ENCODE measurements at regions of chr11 and their contacts with region 1.

Region 1: GRCh38 chr11:103682318-103683184 is 353.9 kb upstream of the DDI1 start:
- DNase-seq: no peak
- H3K4me3 ChIP-seq: no peak overlapping the region
- CTCF ChIP-seq: peak; percentile 74

Region 2: DNA sequence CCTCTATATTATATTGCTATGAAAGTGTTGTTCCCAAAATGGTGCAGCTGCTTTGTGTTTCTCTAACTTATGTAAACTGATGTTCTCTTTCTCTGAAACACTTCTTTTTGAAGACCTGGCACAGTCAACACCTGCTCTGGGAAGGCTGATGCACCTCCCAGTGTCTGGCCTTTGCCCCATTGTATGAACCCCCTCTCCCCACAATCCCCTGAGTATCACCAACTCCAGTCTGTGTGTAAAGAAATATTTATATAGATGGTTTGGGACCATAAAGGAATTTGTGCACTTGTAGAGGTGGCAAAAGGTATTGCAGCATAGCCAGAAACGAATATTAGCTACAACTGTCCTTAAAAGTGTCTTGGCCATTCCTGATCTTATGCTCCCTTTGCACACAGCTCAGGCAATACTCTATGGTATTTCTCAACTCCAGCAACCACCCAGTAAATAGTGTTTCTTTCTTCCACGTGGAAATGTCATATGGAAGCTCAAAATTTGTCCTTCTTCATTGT is 11.4 kb before region 1 on chr11:
- CTCF ChIA-PET with region 1: interaction called, 41 read pairs
- POLR2A ChIA-PET with region 1: no interaction called
- DNase-seq: no peak
- H3K4me3 ChIP-seq: no peak overlapping the region
- CTCF ChIP-seq: no peak

Region 3: GRCh38 chr11:103700622-103701021 is 18.1 kb after region 1 on chr11:
- CTCF ChIA-PET with region 1: interaction called, 101 read pairs
- POLR2A ChIA-PET with region 1: no interaction called
- DNase-seq: peak; percentile 70
- H3K4me3 ChIP-seq: no peak overlapping the region
- CTCF ChIP-seq: no peak

Region 4: DNA sequence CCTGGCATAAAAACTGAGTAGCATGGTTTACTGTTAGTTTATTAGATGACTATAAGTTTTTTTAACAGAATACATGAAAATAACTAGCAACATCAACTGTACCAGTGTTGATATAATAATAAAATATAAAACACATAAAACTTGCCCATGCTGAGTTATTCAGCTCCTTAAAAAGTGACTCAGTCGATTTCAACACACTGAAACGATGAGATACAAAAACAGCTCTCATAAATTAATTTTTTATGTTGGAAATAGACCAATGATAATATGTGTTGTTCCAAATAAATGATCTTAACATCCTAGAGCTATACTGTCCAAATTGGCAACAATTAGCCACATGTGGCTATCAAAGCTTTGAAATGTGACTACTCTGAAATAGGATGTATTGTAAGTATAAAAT is 465.5 kb after region 1 on chr11:
- CTCF ChIA-PET with region 1: interaction called, 32 read pairs
- POLR2A ChIA-PET with region 1: no interaction called
- DNase-seq: no peak
- H3K4me3 ChIP-seq: no peak overlapping the region
- CTCF ChIP-seq: no peak